Ovary (tissue), 10 donors: ENCODE measurements at regions of chr17 and their contacts with region 1.

Region 1: GRCh38 chr17:35088881-35089585 is 25.5 kb upstream of the RFFL start:
- DNase-seq: peak; percentile 82 to 93 (median 88)
- H3K4me3 ChIP-seq: peak overlapping the region; percentile 74
- H3K27ac ChIP-seq: peak overlapping the region; percentile 62 to 66
- H3K4me1 ChIP-seq: peaks cover 6% of the 10 kb centered on the region
- H3K27me3 ChIP-seq: no peaks in the 10 kb centered on the region
- CTCF ChIP-seq: peak; percentile 79 to 82 (median 82)
- EP300 ChIP-seq: no peak
- POLR2A ChIP-seq: peak; percentile 36

Region 2: DNA sequence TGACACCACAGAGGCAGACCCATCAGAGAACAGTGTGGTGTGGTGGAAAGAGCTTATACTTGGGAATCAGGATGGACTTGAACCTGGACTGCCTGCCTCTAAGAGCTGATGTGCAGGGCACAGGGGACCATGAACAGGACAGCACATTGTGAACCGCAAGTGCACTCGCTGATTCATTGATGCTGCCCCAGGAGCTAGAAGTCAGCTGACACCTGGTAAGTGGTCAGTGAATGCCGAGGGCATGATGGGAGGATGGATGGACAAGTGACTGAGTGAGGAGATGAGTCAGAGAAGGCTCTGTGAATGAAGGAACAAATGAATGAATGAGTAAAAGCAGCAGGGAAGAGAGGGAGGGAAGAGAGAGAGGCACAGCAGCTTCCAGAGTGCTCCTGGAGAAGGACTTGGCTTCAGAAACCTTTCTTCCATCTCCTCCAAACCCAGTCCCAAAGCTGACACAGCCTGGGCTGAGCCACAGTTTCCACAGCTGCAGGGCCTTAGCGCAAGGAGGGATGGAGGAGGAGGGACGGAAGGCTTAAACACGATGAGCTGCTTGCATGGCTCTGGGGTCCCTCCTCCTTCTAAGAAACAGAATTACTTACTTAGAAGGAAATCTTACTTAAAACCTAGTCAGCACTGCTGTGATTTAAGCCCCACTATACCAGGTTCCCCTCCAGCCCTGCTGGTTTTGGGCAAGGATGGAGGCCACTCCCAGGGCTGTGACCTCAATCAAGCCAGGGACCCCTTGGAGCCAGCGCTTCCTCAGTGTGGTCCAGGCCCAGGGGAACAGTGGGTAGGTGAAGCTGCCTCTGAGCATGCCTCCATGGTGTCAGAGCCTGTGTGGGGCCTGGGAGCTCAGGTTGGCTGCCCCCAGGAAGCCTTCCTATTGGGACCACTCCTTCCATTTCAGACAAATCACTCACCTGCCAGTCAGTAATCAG is 325.0 kb before region 1 on chr17:
- intact Hi-C with region 1: no loop called
- DNase-seq: no peak
- H3K4me3 ChIP-seq: no peak overlapping the region
- H3K27ac ChIP-seq: no peak overlapping the region
- H3K4me1 ChIP-seq: no peaks in the 10 kb centered on the region
- H3K27me3 ChIP-seq: no peaks in the 10 kb centered on the region
- CTCF ChIP-seq: no peak
- EP300 ChIP-seq: no peak
- POLR2A ChIP-seq: no peak

Region 3: DNA sequence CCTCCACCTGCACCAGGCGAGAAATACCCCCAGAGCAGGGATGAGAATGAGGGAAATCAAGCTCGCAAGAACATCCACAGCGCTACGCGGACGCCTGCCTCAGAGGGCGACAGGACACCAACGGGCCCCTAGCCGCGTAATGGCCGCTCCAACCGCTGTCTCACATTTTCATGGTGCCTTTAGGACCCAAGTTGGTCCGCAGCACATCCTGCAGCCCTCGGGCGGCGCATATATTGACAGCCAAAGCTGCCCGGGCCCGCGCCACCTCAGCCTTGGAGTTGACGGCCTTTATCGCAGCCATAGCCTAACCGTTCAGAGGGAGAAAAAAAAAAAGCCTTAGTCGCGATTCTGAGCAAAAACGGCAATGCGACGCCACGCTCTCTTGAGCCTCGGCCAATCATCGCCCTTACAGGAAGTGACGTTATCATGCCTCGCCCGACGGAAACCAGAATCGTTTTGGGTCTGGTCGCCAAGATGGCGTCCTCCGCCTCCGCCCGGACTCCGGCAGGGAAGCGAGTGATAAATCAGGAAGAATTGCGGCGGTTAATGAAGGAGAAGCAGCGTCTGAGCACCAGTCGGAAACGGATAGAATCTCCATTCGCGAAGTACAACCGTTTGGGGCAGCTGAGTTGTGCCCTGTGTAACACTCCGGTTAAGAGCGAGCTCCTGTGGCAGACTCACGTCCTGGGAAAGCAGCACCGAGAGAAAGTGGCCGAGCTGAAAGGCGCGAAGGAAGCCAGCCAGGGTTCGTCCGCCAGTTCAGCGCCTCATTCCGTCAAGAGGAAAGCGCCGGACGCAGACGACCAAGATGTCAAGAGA is 127.7 kb before region 1 on chr17 and contains the starts of genes CCT6B and ZNF830:
- intact Hi-C with region 1: loop called in 2 of 4 experiments (anchors 10 kb)
- DNase-seq: peak; percentile 90 to 94 (median 93)
- H3K4me3 ChIP-seq: peak within 1 kb of the TSS; percentile 89
- H3K27ac ChIP-seq: peak within 1 kb of the TSS; percentile 75 to 79
- H3K4me1 ChIP-seq: peaks cover 5% of the 10 kb centered on the region
- H3K27me3 ChIP-seq: no peaks in the 10 kb centered on the region
- CTCF ChIP-seq: no peak
- EP300 ChIP-seq: no peak
- POLR2A ChIP-seq: peak; percentile 80
- total RNA-seq, gene CCT6B: 2.6 to 5.8 (median 3.9) TPM
- total RNA-seq, gene ZNF830: 13.2 to 23.1 (median 19.0) TPM

Region 4: DNA sequence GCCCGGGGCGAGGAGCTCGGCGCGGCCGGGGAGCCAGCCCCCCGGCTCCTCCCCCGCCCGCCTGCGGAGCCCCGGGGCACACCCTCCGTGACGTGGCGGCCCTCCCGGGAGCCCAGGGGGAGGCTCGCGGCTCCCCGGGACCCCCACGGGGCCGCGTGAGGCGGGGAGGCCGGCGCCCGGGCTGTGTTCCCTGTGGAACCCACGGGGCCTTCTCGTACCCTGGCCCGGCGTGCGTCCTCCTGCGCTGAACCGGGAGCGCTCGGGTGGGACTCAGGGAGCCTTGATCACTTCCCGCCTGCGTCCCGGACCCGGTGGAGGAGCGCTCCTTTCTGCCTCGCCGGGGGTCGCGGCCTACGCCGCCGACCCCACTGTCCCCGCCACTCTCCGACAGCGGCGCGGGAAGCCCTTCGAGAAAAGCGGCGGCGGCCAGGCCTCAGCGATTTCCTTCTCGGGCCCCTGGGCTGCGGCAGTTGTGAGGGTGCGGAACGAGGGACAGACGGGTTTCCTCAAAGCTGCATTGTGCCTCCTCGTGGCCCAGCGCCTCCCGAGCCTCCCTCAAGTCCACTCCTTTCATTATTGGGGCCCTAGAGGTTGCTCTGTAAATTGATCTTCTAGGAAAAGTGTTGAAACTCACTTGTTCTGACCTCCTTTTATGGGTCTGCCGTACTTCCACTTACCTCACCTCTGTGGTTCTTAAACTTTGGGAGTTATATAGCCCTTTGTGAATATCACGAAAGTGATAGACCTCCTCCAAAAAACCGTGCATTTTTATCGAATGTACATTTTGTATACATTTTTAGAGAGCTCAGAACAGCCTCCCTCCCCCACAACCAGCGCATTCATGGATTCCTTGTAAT is 108.1 kb before region 1 on chr17:
- intact Hi-C with region 1: loop called in 1 of 4 experiments (anchors 10 kb)
- DNase-seq: peak in 4 of 5 donors; percentile 51 to 86 (median 79)
- H3K4me3 ChIP-seq: peak overlapping the region; percentile 84
- H3K27ac ChIP-seq: peak overlapping the region; percentile 99 to 100
- H3K4me1 ChIP-seq: peaks cover 8% of the 10 kb centered on the region
- H3K27me3 ChIP-seq: no peaks in the 10 kb centered on the region
- CTCF ChIP-seq: peak; percentile 13 to 42 (median 18)
- EP300 ChIP-seq: no peak
- POLR2A ChIP-seq: no peak

Region 5: GRCh38 chr17:34998205-34998604 is 90.8 kb before region 1 on chr17:
- intact Hi-C with region 1: loop called in 1 of 4 experiments (anchors 10 kb)
- DNase-seq: no peak
- H3K4me3 ChIP-seq: no peak overlapping the region
- H3K27ac ChIP-seq: peak overlapping the region in 1 of 2 donors; percentile 61
- H3K4me1 ChIP-seq: peaks cover 6% of the 10 kb centered on the region
- H3K27me3 ChIP-seq: no peaks in the 10 kb centered on the region
- CTCF ChIP-seq: no peak
- EP300 ChIP-seq: no peak
- POLR2A ChIP-seq: no peak